Activated naive CD4-positive, alpha-beta T cell treated with anti-CD3 and anti-CD28 coated beads, Interleukin-2, amount 10 ng/mL, durations not matched to agents 7 days and 5 days (primary cell): ENCODE measurements at regions of chr5 and their contacts with region 1.

Region 1: GRCh38 chr5:177071666-177072385 is 14.9 kb upstream of the FGFR4 start:
- DNase-seq: peak; percentile 78
- H3K4me3 Mint-ChIP-seq: no peak overlapping the region
- H3K27ac Mint-ChIP-seq: no peak overlapping the region
- H3K4me1 Mint-ChIP-seq: peaks cover 3% of the 10 kb centered on the region
- H3K27me3 Mint-ChIP-seq: no peaks in the 10 kb centered on the region

Region 2: GRCh38 chr5:177086924-177087706 is 15.3 kb after region 1 on chr5:
- CTCF ChIA-PET with region 1: interaction called, 25 read pairs
- DNase-seq: peak; percentile 74
- H3K4me3 Mint-ChIP-seq: peak overlapping the region; percentile 28
- H3K27ac Mint-ChIP-seq: no peak overlapping the region
- H3K4me1 Mint-ChIP-seq: peaks cover 8% of the 10 kb centered on the region
- H3K27me3 Mint-ChIP-seq: peaks cover 81% of the 10 kb centered on the region